Activated naive CD4-positive, alpha-beta T cell treated with anti-CD3 and anti-CD28 coated beads for 36 hours (primary cell): ENCODE measurements at regions of chr11 and their contacts with region 1.

Region 1: GRCh38 chr11:62337303-62338181 is at the start of gene ASRGL1:
- DNase-seq: peak; percentile 75
- H3K4me3 Mint-ChIP-seq: peak within 1 kb of the TSS; percentile 83
- H3K27ac Mint-ChIP-seq: peak within 1 kb of the TSS; percentile 16
- H3K4me1 Mint-ChIP-seq: peaks cover 9% of the 10 kb centered on the region
- H3K27me3 Mint-ChIP-seq: peaks cover 7% of the 10 kb centered on the region
- total RNA-seq, gene ASRGL1: 9.5 to 11.6 TPM

Region 2: DNA sequence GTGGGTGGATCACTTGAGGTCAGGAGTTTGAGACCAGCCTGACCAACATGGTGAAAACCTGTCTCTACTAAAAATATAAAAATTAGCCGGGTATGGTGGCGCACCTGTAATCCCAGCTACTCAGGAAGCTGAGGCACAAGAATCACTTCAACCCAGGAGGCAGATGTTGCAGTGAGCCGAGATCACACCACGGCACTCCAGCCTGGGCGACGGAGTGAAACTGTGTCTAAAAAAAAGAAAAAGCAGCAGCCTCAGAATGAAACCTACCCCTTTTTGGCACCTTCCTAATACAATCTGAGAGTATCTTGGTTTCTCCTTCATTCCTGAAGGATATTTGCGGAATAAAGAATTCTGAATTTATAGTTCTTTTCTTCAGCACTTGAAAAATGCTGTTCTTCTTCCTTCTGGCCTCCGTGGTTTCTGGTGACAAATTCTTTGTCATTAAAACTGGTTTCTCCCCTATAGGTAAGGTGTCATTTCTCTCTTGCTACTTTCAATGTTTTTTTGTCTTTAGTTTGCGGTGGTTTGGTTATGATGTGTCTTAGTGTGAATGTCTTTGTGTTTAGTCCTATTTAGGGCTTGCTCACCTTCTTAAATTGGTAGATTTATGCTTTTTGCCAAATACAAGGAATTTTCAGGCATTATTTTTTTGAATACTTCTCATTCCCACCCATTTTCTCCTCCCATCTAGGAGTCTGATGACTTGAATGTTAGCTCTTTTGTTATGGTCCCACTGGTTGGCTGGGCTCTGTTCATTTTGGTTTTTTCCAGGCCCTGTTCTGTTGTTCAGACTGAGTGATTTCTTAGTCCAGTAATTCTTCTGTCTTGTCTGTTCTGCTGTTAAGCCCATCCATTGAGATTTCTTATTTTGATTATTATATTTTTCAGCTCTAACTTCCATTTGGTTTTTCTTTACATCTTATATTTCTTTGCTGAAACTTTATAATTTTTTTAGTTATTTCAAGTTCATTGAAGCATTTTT is 15.1 kb after region 1 on chr11:
- CTCF ChIA-PET with region 1: interaction called, 5 read pairs
- intact Hi-C with region 1: loop called (anchors 1 kb)
- DNase-seq: no peak
- H3K4me3 Mint-ChIP-seq: no peak overlapping the region
- H3K27ac Mint-ChIP-seq: peak overlapping the region; percentile 9
- H3K4me1 Mint-ChIP-seq: peaks cover 9% of the 10 kb centered on the region
- H3K27me3 Mint-ChIP-seq: no peaks in the 10 kb centered on the region

Region 3: GRCh38 chr11:62383822-62384221 is 46.3 kb after region 1 on chr11:
- CTCF ChIA-PET with region 1: interaction called, 23 read pairs
- intact Hi-C with region 1: no loop called
- DNase-seq: no peak
- H3K4me3 Mint-ChIP-seq: no peak overlapping the region
- H3K27ac Mint-ChIP-seq: no peak overlapping the region
- H3K4me1 Mint-ChIP-seq: peaks cover 11% of the 10 kb centered on the region
- H3K27me3 Mint-ChIP-seq: no peaks in the 10 kb centered on the region